ENCODE measurements at regions of chr5 and their contacts with region 1.

Region 1: GRCh38 chr5:88660947-88661805 is 221.8 kb downstream of the MEF2C start:
- DNase-seq: peak; percentile 97
- H3K4me3 Mint-ChIP-seq: peak overlapping the region; percentile 93
- H3K27ac Mint-ChIP-seq: peak overlapping the region; percentile 77
- H3K4me1 Mint-ChIP-seq: peaks cover 4% of the 10 kb centered on the region
- H3K27me3 Mint-ChIP-seq: no peaks in the 10 kb centered on the region
- CTCF ChIP-seq: no peak

Region 2: DNA sequence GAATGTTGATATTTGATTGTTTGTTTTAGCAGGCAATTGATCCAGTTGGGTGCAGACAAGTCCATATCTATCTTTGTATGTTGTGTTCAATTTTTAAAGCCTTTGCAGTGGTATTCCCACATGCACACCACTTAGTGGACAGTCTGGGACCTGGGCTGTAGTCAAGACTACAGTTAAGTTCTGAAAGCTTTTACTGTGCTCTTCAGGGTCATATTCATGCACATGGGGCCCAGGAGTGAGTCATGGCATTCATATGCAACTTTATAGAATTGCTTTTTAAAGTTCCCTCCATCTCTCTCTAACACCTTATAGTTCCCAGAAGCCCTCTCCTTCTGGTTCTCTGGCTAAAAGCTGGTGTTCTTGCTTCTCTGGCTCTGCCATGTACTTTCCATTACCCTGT is 1020.3 kb before region 1 on chr5:
- CTCF ChIA-PET with region 1: no interaction called
- intact Hi-C with region 1: no loop called
- DNase-seq: no peak
- H3K4me3 Mint-ChIP-seq: no peak overlapping the region
- H3K27ac Mint-ChIP-seq: no peak overlapping the region
- H3K4me1 Mint-ChIP-seq: peaks cover 9% of the 10 kb centered on the region
- H3K27me3 Mint-ChIP-seq: no peaks in the 10 kb centered on the region
- CTCF ChIP-seq: no peak

Region 3: GRCh38 chr5:88438011-88438410 is 223.2 kb before region 1 on chr5:
- CTCF ChIA-PET with region 1: no interaction called
- intact Hi-C with region 1: loop called (anchors 5 kb)
- DNase-seq: peak; percentile 81
- H3K4me3 Mint-ChIP-seq: no peak overlapping the region
- H3K27ac Mint-ChIP-seq: peak overlapping the region; percentile 68
- H3K4me1 Mint-ChIP-seq: peaks cover 20% of the 10 kb centered on the region
- H3K27me3 Mint-ChIP-seq: no peaks in the 10 kb centered on the region
- CTCF ChIP-seq: no peak

Region 4: GRCh38 chr5:88486431-88486830 is 174.7 kb before region 1 on chr5:
- CTCF ChIA-PET with region 1: no interaction called
- intact Hi-C with region 1: no loop called
- DNase-seq: no peak
- H3K4me3 Mint-ChIP-seq: no peak overlapping the region
- H3K27ac Mint-ChIP-seq: no peak overlapping the region
- H3K4me1 Mint-ChIP-seq: no peaks in the 10 kb centered on the region
- H3K27me3 Mint-ChIP-seq: no peaks in the 10 kb centered on the region
- CTCF ChIP-seq: no peak

Region 5: DNA sequence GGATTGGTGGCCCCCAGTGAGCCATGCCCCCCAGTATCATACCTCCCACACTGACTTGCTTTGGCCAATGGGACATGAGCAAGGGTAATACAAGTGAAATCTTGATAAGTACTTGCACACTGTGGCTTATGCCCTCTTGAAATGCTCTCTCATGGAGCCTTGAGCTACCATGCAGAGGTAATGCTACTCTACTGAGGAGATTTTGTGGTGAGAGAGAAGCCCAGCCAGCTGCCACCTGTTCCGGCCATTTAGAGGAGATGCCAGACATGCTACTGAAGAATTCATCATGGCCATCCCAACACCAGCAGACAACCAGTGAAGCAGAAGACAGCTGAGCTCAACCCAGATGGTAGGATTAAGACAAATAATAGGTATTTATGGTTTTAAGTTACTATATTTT is 77.7 kb before region 1 on chr5:
- CTCF ChIA-PET with region 1: no interaction called
- intact Hi-C with region 1: no loop called
- DNase-seq: no peak
- H3K4me3 Mint-ChIP-seq: no peak overlapping the region
- H3K27ac Mint-ChIP-seq: no peak overlapping the region
- H3K4me1 Mint-ChIP-seq: no peaks in the 10 kb centered on the region
- H3K27me3 Mint-ChIP-seq: no peaks in the 10 kb centered on the region
- CTCF ChIP-seq: no peak